ENCODE measurements at regions of chr2 and their contacts with region 1.

Region 1: DNA sequence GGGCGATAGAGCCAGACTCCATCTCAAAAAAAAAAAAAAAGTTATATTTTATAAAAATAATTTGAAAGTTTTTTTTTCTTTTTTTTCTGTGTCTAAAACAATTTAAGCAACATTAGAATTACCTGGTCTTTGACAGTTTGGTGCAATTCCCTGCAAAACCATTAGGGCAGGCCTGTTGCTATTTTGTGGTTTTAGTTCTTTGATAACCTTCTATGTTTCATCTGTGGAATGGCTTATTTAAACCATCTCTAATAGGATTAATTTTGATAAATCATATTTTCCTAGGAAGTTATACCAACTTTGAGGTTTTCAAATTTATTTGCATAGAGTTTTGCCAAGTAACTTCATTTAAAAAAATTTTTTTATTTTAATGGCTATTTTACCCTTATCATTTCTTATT is 141.2 kb upstream of the TWIST2 start:
- DNase-seq: no peak
- ATAC-seq: no peak
- H3K4me3 ChIP-seq: no peak overlapping the region
- H3K27ac ChIP-seq: no peak overlapping the region
- H3K4me1 ChIP-seq: no peaks in the 10 kb centered on the region
- H3K27me3 ChIP-seq: peaks cover 0 to 7% (median 0%) of the 10 kb centered on the region in 3 donors
- CTCF ChIP-seq: peak; percentile 6

Region 2: DNA sequence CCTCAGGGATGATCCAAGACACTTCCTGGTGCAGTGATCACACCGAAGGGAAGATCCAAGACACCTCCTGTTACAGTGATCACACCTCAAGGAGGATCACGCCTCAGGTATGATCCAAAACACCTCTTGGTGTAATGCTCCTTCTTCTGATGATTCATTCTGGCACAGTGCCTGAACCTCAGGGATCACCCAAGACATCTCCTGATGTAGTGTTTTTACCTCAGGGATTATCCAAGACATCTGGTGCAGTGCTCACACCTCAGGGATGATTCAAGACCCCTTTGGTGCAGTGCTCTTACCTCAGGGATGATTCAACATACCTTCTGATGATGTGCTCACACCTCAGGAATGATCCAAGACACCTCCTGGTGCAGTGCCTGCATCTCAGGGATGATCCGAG is 155.6 kb before region 1 on chr2:
- intact Hi-C with region 1: no loop called
- DNase-seq: no peak
- ATAC-seq: no peak
- H3K4me3 ChIP-seq: no peak overlapping the region
- H3K27ac ChIP-seq: no peak overlapping the region
- H3K4me1 ChIP-seq: no peaks in the 10 kb centered on the region
- H3K27me3 ChIP-seq: peaks cover 0 to 3% (median 0%) of the 10 kb centered on the region in 3 donors
- CTCF ChIP-seq: no peak

Region 3: GRCh38 chr2:238720232-238720672 is 13.6 kb after region 1 on chr2:
- intact Hi-C with region 1: loop called in 1 of 2 experiments (anchors 2 kb)
- DNase-seq: peak in 1 of 2 donors; percentile 78
- ATAC-seq: peak in 3 of 4 donors; percentile 62 to 72 (median 66)
- H3K4me3 ChIP-seq: no peak overlapping the region
- H3K27ac ChIP-seq: no peak overlapping the region
- H3K4me1 ChIP-seq: no peaks in the 10 kb centered on the region
- H3K27me3 ChIP-seq: peaks cover 0 to 15% (median 0%) of the 10 kb centered on the region in 3 donors
- CTCF ChIP-seq: peak; percentile 56

Measured in psoas muscle (tissue), 8 donors.